ENCODE measurements at regions of chr17 and their contacts with region 1.

Region 1: GRCh38 chr17:14300575-14301278 is at the start of gene HS3ST3B1:
- DNase-seq: peak; percentile 99
- H3K4me3 ChIP-seq: peak within 1 kb of the TSS; percentile 58 to 73 (median 69)
- H3K27ac ChIP-seq: peak within 1 kb of the TSS; percentile 34
- H3K4me1 ChIP-seq: peaks cover 32% of the 10 kb centered on the region
- H3K27me3 ChIP-seq: peaks cover 23% of the 10 kb centered on the region
- CTCF ChIP-seq: no peak
- total RNA-seq, gene HS3ST3B1: 4.0 to 14.7 TPM

Region 2: DNA sequence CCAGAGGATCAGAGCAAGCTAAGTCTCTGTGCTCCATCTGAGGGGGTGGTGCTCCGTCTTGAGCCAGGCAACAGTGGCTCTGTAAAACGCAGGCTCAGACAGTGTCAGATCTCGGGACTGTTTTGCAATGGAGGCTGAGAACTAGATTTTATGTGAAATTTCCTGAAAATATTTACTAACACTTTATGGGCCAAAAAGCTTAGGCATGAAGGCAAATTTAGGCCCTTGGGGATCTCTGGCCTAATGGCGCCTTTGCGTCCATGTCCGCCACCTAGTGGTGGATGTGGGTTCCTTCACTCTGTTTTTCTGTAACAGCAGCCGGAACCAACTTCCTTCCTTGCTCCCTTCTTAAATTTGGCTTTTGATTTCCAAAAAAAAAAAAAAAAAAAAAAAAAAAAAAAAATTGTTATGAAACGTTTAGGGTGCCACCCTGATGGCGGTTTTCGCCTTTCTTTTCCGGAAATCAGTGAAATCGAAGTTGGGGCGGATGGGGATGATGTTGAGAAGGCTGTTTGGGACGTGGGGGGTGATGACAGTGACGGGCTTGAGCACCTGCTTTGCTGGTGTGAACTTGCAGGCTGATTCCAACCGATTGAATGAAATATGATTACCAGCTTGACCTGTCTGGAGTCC is 1268.9 kb before region 1 on chr17:
- CTCF ChIA-PET with region 1: no interaction called
- dilution Hi-C with region 1: no loop called
- in situ Hi-C with region 1: no loop called
- intact Hi-C with region 1: loop called (anchors 2 kb)
- DNase-seq: peak; percentile 14
- H3K4me3 ChIP-seq: no peak overlapping the region
- H3K27ac ChIP-seq: no peak overlapping the region
- H3K4me1 ChIP-seq: no peaks in the 10 kb centered on the region
- H3K27me3 ChIP-seq: peaks cover 2% of the 10 kb centered on the region
- CTCF ChIP-seq: peak; percentile 85 to 89

Region 3: GRCh38 chr17:13594762-13595598 is 705.7 kb before region 1 on chr17:
- CTCF ChIA-PET with region 1: interaction called, 4 read pairs
- dilution Hi-C with region 1: no loop called
- in situ Hi-C with region 1: loop called (anchors 10 to 25 kb)
- intact Hi-C with region 1: loop called (anchors 1 kb)
- DNase-seq: peak; percentile 62
- H3K4me3 ChIP-seq: no peak overlapping the region
- H3K27ac ChIP-seq: no peak overlapping the region
- H3K4me1 ChIP-seq: peaks cover 3% of the 10 kb centered on the region
- H3K27me3 ChIP-seq: no peaks in the 10 kb centered on the region
- CTCF ChIP-seq: peak; percentile 88 to 91

Region 4: DNA sequence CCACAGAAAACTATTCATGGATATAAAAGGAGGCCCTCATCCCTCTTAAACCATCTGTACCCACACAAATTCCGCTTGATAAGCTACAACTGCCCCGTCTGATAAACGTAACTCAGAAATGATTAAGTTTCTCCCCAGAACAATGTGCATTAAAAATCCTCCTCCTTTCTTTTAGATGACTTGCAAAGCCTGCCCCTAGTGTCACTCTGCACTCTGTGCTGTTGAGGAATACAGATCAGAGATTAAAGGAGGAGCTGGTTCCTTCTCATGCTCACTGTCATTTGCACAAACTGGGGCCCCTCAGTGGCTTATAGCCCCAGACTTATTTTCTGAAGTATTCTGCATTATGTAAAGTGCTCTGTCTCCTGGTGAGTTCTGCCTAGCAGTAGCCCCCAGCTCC is 97.3 kb before region 1 on chr17:
- CTCF ChIA-PET with region 1: no interaction called
- dilution Hi-C with region 1: no loop called
- in situ Hi-C with region 1: no loop called
- intact Hi-C with region 1: loop called (anchors 10 kb)
- DNase-seq: no peak
- H3K4me3 ChIP-seq: no peak overlapping the region
- H3K27ac ChIP-seq: no peak overlapping the region
- H3K4me1 ChIP-seq: peaks cover 16% of the 10 kb centered on the region
- H3K27me3 ChIP-seq: no peaks in the 10 kb centered on the region
- CTCF ChIP-seq: peak; percentile 40 to 51

Region 5: GRCh38 chr17:14409292-14409691 is 108.6 kb after region 1 on chr17:
- CTCF ChIA-PET with region 1: no interaction called
- dilution Hi-C with region 1: no loop called
- in situ Hi-C with region 1: no loop called
- intact Hi-C with region 1: no loop called
- DNase-seq: no peak
- H3K4me3 ChIP-seq: no peak overlapping the region
- H3K27ac ChIP-seq: no peak overlapping the region
- H3K4me1 ChIP-seq: no peaks in the 10 kb centered on the region
- H3K27me3 ChIP-seq: no peaks in the 10 kb centered on the region
- CTCF ChIP-seq: no peak

Region 6: DNA sequence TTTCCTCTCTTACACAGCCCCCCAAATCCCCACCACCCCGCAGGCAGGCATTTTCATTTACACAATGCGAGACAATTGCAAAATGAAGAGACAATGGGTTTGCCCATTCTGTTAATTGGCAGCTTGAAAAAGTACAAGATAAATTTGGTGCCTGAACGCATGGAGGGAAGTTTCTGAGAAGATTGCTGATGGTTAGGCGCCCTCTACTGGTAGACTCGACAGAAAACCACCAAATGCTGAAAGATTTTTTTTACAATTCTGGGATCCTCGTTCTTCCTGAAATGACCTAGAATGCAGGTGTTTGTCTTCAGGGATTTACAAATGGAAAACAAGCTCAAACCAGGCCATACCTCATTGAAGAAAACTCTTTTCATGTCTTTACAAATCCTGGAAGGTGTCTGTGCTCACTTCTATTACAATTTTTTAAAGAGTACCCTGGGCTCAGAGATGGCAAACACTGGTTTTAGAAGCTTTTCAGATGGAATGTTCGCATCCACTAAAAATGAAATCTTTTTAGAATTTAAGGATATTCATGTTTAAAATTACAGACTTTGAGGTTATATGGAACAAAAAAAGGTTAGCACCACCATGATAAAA is 625.9 kb after region 1 on chr17:
- CTCF ChIA-PET with region 1: no interaction called
- dilution Hi-C with region 1: no loop called
- in situ Hi-C with region 1: loop called in 1 of 2 experiments (anchors 25 kb)
- intact Hi-C with region 1: loop called (anchors 1 kb)
- DNase-seq: peak; percentile 40
- H3K4me3 ChIP-seq: no peak overlapping the region
- H3K27ac ChIP-seq: no peak overlapping the region
- H3K4me1 ChIP-seq: no peaks in the 10 kb centered on the region
- H3K27me3 ChIP-seq: peaks cover 2% of the 10 kb centered on the region
- CTCF ChIP-seq: peak; percentile 63 to 78

Measured in mammary epithelial cell (primary cell).